Mammary epithelial cell (primary cell): ENCODE measurements at regions of chr1 and their contacts with region 1.

Region 1: DNA sequence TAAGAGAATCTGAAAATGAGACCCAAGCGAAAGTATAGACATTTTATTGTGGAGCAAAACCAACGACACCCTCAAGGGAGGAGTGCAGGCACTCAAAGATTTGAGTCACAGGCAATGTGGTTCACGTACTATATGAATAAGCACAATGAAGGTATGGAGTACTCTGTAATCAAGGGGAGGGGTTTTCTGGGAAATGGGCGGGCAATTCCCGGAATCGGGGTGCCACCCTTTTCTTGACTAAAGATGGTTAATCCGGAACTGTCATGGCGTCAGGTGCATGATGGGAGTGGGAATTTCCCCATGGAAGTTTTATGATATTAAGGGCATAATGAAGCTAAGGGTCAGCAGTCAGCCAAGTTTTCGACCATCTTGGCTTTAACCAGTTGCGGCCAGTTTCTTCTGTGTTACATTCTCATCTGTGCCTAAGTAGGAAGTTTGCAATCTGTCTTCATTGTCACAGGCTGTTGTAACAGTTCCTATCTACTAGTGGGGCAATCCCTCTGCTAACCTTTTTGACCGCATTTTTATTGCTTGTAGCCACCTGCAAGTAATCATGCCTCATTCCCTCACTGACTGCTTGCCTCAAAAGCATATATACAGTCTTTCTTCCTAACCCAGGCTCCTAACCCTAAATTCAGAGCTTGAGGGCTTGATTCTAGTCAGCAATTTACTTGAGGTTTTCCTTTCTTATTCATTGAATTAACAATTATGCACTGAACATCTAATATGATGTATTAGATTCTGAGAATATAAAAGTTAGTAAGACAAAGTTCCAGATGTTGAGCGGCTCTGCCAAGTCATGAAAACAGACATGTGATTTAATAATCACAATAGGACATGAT is 775 bp upstream of the AIM2 start:
- DNase-seq: no peak
- H3K4me3 ChIP-seq: no peak overlapping the region
- H3K27ac ChIP-seq: no peak overlapping the region
- H3K4me1 ChIP-seq: no peaks in the 10 kb centered on the region
- H3K27me3 ChIP-seq: no peaks in the 10 kb centered on the region
- CTCF ChIP-seq: no peak

Region 2: DNA sequence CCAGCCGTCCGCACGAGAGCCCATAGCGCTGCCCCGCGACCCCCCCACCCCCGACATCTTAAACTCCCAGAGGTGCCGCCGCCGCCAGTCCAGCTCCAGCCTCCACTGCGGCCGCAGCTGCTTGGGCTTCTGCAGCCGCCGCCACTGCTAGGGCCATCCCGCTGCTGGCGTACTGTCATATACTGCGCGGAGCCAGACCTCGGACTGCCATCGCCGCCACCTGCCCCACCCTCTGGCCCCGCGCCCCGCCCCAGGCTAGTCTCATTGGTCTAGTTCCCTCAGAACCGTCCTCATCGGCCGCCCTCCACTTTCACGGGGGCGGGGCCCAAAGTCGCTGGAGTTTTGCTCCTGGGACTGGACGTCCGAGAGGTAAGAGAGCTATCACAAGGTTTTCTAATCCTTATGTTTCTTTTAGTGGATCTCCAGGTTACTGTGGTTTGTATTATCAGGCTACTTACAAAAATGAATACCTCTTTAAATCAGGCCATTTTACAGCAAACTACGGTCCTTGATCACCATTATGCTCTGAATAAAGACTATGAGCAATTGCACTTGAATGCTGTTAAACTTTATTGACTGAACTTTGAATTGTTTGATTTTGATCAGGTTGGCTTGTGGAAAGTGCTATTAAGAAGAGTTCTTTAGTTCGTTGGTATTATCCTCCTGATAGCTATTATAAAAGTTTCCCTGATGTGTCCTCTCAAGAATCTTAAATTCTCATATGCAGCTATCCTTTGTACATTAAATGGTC is 899.5 kb before region 1 on chr1:
- CTCF ChIA-PET with region 1: no interaction called
- dilution Hi-C with region 1: no loop called
- in situ Hi-C with region 1: loop called in 1 of 2 experiments (anchors 25 kb)
- intact Hi-C with region 1: no loop called
- DNase-seq: peak; percentile 81
- H3K4me3 ChIP-seq: peak overlapping the region; percentile 49 to 52 (median 49)
- H3K27ac ChIP-seq: peak overlapping the region; percentile 33
- H3K4me1 ChIP-seq: peaks cover 18% of the 10 kb centered on the region
- H3K27me3 ChIP-seq: no peaks in the 10 kb centered on the region
- CTCF ChIP-seq: no peak

Region 3: DNA sequence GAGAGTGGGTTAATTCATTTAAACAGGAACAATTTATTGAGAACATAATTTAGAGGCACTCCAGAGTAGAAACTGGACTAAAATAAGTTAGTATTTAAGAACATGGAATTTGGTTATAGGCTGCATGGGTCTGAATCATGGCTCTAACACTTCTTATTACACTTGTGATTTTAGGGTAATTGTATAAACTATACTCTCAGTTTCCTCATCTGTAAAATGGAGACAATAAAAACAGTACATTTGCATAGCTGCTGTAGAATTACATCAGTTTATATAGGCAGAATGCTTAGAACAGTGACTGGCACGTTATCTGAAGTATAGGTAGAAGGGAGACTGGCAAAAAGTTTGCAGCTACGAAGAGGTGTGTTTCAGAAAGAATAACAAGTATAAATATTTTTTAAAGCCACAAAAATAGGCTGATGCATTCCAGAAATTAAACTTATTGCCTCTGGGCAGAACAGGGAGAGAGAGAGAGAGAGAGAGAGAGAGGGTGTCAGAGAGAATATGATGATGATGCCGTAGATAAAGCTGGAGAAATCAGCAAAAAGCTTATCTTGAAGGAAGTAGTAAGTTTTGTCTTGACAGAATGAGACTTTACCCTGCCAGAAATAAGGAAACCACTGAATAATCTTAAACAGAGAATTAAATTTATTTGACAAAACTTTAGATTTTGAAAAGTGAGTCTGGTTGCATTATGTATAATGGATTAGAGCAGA is 348.7 kb before region 1 on chr1:
- CTCF ChIA-PET with region 1: no interaction called
- dilution Hi-C with region 1: no loop called
- in situ Hi-C with region 1: no loop called
- intact Hi-C with region 1: no loop called
- DNase-seq: no peak
- H3K4me3 ChIP-seq: no peak overlapping the region
- H3K27ac ChIP-seq: no peak overlapping the region
- H3K4me1 ChIP-seq: no peaks in the 10 kb centered on the region
- H3K27me3 ChIP-seq: peaks cover 2% of the 10 kb centered on the region
- CTCF ChIP-seq: no peak

Region 4: GRCh38 chr1:158873141-158873540 is 204.2 kb before region 1 on chr1:
- CTCF ChIA-PET with region 1: no interaction called
- dilution Hi-C with region 1: no loop called
- in situ Hi-C with region 1: no loop called
- intact Hi-C with region 1: no loop called
- DNase-seq: no peak
- H3K4me3 ChIP-seq: no peak overlapping the region
- H3K27ac ChIP-seq: no peak overlapping the region
- H3K4me1 ChIP-seq: no peaks in the 10 kb centered on the region
- H3K27me3 ChIP-seq: no peaks in the 10 kb centered on the region
- CTCF ChIP-seq: no peak

Region 5: GRCh38 chr1:159040893-159041724 is 36.2 kb before region 1 on chr1:
- CTCF ChIA-PET with region 1: no interaction called
- dilution Hi-C with region 1: no loop called
- in situ Hi-C with region 1: no loop called
- intact Hi-C with region 1: no loop called
- DNase-seq: no peak
- H3K4me3 ChIP-seq: no peak overlapping the region
- H3K27ac ChIP-seq: no peak overlapping the region
- H3K4me1 ChIP-seq: no peaks in the 10 kb centered on the region
- H3K27me3 ChIP-seq: no peaks in the 10 kb centered on the region
- CTCF ChIP-seq: no peak